Left colon (tissue), 2 donors: ENCODE measurements at regions of chr6 and their contacts with region 1.

Region 1: DNA sequence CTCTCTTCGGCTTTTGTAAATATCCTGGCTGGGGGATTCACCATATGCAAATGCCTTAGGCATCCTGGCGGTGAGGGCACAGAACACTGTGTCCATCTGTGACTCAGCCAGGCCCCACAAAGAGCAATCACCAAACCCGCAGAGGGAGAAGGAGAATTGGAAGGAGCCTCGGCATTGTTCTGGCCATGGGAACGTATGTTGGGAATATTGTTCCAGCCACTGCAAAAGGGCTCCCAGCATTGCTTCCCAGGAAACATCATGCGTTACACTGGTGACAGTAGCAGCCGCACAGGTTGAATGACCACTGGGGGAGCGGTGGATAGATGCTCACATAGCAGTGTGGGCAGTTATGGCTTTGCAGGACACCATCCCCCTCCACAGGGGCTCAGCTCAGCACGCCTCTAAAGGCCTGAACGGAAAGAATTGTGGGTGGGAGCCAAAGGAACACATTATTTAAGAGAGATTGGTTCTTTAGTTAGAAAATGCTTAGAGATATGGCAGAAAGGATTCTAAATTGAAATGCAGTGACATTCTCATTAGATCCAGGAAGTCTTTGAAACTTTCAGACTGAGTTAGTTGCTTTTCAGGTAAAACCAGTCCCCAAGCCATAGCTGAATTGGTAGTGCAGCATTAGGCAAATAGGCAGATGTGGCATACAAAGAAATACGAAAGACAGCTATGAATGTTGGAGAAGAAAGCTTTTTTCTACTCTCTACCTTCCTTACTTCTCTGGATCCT is 104.3 kb downstream of the RNF144B start:
- DNase-seq: no peak
- ATAC-seq: no peak

Region 2: GRCh38 chr6:17845598-17845997 is 645.9 kb before region 1 on chr6:
- intact Hi-C with region 1: no loop called
- DNase-seq: no peak
- ATAC-seq: peak; percentile 29

Region 3: DNA sequence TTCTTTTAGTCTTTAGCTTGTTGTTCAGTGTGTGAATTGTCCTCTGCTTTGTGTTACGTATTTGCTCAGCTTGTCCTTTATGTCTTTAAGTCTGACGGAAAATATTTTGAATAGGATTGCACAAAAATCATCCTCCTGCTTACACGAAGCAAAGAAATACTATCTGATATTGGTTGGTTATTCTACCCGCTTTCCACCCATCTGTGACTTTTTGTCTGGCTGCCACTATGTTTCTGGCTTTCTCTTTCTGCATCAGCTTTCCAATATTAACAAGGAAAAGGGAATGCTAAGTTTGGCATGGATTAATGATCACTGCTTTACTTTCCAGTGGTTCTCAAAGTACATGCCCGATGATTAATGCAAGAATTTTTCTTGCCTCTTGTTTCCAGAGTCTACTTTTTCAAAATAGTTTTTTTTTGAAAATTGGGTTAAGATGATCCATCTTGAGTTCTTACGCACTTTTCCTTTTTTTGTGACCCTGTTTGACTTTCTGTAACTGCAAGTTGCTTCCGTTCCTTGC is 47.4 kb before region 1 on chr6:
- intact Hi-C with region 1: loop called in 1 of 2 experiments (anchors 10 kb)
- DNase-seq: no peak
- ATAC-seq: no peak